Activated CD8-positive, alpha-beta memory T cell treated with anti-CD3 and anti-CD28 coated beads, Interleukin-2, amount 10 ng/mL, durations not matched to agents 7 days and 5 days (primary cell): ENCODE measurements at regions of chr3 and their contacts with region 1.

Region 1: GRCh38 chr3:49339945-49340800 is at the start of gene USP4:
- DNase-seq: peak; percentile 95
- ATAC-seq: peak; percentile 91
- H3K4me3 Mint-ChIP-seq: peak within 1 kb of the TSS; percentile 96
- H3K27ac Mint-ChIP-seq: peak within 1 kb of the TSS; percentile 95
- H3K4me1 Mint-ChIP-seq: peaks cover 38% of the 10 kb centered on the region
- H3K27me3 Mint-ChIP-seq: no peaks in the 10 kb centered on the region
- total RNA-seq, gene USP4: 79.9 to 84.5 TPM

Region 2: GRCh38 chr3:49329186-49329585 is 11.0 kb before region 1 on chr3:
- CTCF ChIA-PET with region 1: interaction called, 13 read pairs
- DNase-seq: no peak
- ATAC-seq: no peak
- H3K4me3 Mint-ChIP-seq: no peak overlapping the region
- H3K27ac Mint-ChIP-seq: no peak overlapping the region
- H3K4me1 Mint-ChIP-seq: peaks cover 14% of the 10 kb centered on the region
- H3K27me3 Mint-ChIP-seq: no peaks in the 10 kb centered on the region

Region 3: GRCh38 chr3:49411968-49412631 is 71.9 kb after region 1 on chr3 and contains the starts of genes RHOA and TCTA:
- CTCF ChIA-PET with region 1: interaction called, 21 read pairs
- DNase-seq: peak; percentile 99
- ATAC-seq: peak; percentile 85
- H3K4me3 Mint-ChIP-seq: peak within 1 kb of the TSS; percentile 95
- H3K27ac Mint-ChIP-seq: peak within 1 kb of the TSS; percentile 92
- H3K4me1 Mint-ChIP-seq: peaks cover 62% of the 10 kb centered on the region
- H3K27me3 Mint-ChIP-seq: no peaks in the 10 kb centered on the region
- total RNA-seq, gene RHOA: 439 to 539 TPM
- total RNA-seq, gene TCTA: 27.7 to 28.0 TPM

Region 4: GRCh38 chr3:49445381-49445780 is 105.2 kb after region 1 on chr3:
- CTCF ChIA-PET with region 1: interaction called, 62 read pairs
- DNase-seq: no peak
- ATAC-seq: no peak
- H3K4me3 Mint-ChIP-seq: no peak overlapping the region
- H3K27ac Mint-ChIP-seq: peak overlapping the region; percentile 24
- H3K4me1 Mint-ChIP-seq: peaks cover 19% of the 10 kb centered on the region
- H3K27me3 Mint-ChIP-seq: no peaks in the 10 kb centered on the region

Region 5: DNA sequence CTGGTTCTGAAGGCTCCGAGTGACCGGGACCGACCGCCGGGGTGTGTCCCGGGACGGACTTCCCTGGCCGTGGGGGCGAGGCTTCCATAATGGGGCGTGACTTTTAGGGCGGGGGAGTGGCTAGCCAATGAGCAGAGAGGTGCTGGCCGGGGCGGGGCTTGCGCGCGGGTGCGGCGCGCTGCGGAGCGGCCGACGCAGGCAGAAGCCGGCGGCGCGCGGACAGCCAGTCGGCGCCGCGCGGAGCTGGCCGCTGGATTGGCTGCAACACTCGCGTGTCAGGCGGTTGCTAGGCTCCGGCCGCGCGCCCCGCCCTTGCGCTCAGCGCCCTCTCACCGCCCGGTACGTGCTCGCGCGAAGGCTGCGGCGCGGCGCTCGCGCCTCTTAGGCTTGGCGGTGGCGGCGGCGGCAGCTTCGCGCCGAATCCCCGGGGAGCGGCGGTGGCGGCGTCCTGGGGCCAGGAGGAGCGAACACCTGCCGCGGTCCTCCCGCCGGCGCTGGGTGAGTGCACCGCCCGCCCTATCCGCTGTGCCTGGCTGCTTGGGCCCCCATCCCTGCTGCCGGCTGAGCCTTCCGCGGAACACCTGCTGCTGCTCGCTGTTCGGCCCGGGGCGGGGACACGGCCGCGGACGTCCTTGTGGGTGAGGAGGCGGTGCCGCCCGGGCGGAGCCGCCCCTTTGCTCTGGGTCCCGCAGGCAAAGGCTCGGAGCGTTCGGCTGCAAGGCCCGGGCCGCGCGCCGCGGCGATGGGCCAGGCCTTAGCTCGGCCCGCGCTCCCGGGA is 130.0 kb after region 1 on chr3 and contains the start of gene DAG1:
- CTCF ChIA-PET with region 1: interaction called, 10 read pairs
- DNase-seq: peak; percentile 97
- ATAC-seq: peak; percentile 90
- H3K4me3 Mint-ChIP-seq: peak within 1 kb of the TSS; percentile 87
- H3K27ac Mint-ChIP-seq: peak within 1 kb of the TSS; percentile 90
- H3K4me1 Mint-ChIP-seq: peaks cover 22% of the 10 kb centered on the region
- H3K27me3 Mint-ChIP-seq: no peaks in the 10 kb centered on the region
- total RNA-seq, gene DAG1: 17.6 to 17.9 TPM